ENCODE measurements at regions of chr18 and their contacts with region 1.

Region 1: GRCh38 chr18:13513021-13513420 is 213.3 kb downstream of the FAM210A start:
- DNase-seq: peak in 1 of 2 donors; percentile 58
- H3K4me3 ChIP-seq: no peak overlapping the region
- H3K27ac ChIP-seq: peak overlapping the region in 1 of 2 donors; percentile 17
- H3K4me1 ChIP-seq: peaks cover 0 to 14% of the 10 kb centered on the region in 2 donors
- H3K27me3 ChIP-seq: no peaks in the 10 kb centered on the region
- CTCF ChIP-seq: no peak

Region 2: DNA sequence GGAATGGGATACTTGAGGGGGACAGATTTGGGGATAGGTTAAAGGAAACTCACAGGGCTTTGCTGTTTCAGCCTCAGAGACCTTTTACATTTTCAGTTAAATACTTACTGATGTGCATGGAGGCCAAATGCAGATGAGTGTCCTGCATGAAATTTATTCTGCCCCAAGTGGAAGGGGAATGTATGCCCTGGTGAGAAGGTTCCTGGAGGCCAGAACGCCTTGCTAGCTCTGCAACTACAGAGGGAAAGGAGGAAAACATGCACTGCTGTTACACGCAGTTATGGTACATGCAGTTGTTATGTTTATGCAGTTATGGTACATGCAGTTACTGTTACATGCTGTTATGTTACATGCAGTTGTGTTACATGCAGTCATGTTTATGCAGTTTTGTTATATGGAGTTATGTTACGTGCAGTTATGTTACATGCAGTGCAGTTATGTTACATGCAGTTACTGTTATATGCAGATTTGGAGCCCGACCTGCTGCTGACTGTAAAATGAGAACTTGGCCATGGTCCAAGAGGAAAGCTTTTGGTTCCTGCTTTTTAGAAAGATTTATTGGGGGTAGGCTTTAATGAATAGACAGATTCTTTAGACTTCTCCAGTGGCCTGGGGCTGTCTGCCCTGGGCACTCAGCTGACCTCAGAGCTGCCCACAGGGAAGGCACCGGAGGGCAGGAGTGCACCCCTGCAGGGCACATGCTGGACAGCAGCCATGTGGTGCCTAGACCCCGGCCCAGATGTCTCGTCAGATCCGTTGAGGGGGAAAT is 210.4 kb before region 1 on chr18:
- intact Hi-C with region 1: loop called (anchors 5 kb)
- DNase-seq: no peak
- H3K4me3 ChIP-seq: no peak overlapping the region
- H3K27ac ChIP-seq: no peak overlapping the region
- H3K4me1 ChIP-seq: peaks cover 0 to 22% of the 10 kb centered on the region in 2 donors
- H3K27me3 ChIP-seq: no peaks in the 10 kb centered on the region
- CTCF ChIP-seq: no peak

Region 3: GRCh38 chr18:13680612-13681011 is 167.6 kb after region 1 on chr18:
- intact Hi-C with region 1: no loop called
- DNase-seq: no peak
- H3K4me3 ChIP-seq: no peak overlapping the region
- H3K27ac ChIP-seq: no peak overlapping the region
- H3K4me1 ChIP-seq: peaks cover 3 to 12% of the 10 kb centered on the region in 2 donors
- H3K27me3 ChIP-seq: no peaks in the 10 kb centered on the region
- CTCF ChIP-seq: peak; percentile 24 to 58 (median 39)

Region 4: DNA sequence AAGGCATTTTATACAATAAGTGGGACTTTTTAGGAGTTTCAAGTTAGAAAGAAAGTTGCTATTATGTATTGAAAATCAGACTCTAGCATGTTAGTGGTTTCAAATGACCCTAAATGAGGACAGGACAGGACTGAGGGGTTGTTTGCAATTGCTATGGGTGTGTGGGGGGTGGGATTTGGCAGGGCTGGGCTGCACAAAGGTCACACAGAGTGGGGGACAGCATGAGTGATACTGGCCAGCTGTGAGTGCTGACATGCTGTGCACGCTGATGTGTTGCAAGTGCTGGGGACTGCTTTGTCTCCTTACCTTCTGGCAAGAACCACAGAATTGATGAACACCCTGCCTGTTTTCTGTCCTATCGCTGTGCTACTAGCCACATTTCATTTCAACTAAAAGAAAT is 243.2 kb after region 1 on chr18:
- intact Hi-C with region 1: no loop called
- DNase-seq: no peak
- H3K4me3 ChIP-seq: no peak overlapping the region
- H3K27ac ChIP-seq: no peak overlapping the region
- H3K4me1 ChIP-seq: no peaks in the 10 kb centered on the region
- H3K27me3 ChIP-seq: no peaks in the 10 kb centered on the region
- CTCF ChIP-seq: no peak

Measured in ascending aorta (tissue), 2 donors.